ENCODE measurements at regions of chr12 and their contacts with region 1.

Region 1: DNA sequence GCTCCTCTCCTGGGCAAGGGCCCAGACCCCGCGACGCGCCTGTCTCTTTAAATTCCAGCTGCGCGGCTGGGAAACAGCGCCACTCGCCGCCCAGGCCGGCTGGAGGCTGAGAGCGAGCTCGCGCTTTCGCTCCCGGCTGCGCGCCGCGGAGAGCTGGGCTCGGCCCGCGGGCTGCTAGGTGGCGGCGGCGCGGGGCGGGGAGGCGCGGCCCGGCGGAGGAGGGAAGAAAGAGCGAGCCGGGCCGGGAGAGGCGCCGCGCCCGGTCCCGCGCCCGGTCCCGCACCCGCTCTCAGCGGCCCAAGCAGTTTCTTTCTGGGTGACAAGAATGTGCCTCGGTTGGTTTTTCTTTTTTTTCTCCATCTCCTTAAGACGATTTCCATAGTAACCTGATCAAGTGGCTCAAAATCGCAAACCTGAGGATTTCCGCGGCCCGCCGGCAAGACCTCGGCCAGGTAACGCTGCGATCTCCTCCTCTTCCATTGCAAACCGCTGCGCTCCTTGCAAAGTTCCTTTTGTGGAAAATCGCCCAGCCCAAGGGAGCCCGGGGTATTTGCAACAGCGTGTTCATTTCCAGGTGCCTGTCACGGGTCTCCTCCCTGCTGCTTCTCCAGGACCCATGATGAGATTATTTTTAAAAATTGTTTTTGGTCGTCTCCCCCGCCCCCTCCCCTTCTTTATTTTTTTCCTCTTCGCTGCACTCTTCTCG is 259.5 kb upstream of the E2F7 start:
- DNase-seq: peak; percentile 54 to 83 (median 70)
- H3K4me3 ChIP-seq: peak overlapping the region; percentile 56 to 84 (median 73)
- H3K27ac ChIP-seq: peak overlapping the region in 57 of 59 donors; percentile 13 to 92 (median 82)
- H3K27me3 ChIP-seq: no peaks in the 10 kb centered on the region
- CTCF ChIP-seq: peak in 53 of 56 donors; percentile 19 to 71 (median 46)

Region 2: DNA sequence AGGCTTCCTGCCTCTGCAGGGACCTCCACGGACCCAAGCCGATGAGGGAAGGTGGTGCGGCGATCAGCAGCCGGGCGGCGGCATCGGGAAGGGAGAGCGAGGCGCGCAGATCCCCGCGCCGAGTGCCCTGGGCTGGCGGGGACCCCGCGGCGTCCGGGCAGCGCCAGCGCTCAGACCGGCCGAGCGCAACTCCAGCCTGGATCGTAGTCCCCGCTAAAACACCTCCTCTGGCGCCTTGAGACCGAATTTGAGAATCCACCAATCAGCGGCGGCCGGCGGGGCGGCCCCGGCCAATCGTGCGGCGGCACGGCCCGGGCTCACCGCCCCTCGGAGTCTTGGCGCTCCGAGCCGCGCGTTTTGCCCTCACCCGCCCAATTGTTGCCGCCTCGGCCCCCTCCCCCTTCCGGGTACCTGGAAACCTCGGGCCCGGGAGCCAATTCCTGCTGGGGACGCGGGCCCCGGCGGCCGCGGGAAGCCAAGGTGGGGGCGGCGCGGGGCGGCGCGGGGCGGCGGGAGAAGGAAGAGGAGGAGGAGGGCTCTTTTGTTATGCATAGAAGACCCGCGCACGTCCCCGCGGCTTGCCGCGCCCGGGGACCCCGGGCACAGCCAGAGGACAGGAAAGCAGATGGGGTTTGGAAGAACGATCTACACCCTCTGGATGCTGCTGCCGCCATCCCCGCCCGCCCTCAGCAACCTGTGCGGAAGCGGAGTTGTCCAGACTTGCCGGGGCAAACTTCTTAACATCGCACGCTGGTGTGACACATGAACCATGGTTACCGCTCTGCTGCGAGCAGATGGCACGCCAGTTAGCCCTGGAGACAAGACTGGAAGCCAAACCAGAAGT is 259.3 kb before region 1 on chr12 and contains the start of gene E2F7:
- intact Hi-C with region 1: loop called in 1 of 2 experiments (anchors 10 kb)
- DNase-seq: peak; percentile 66 to 91 (median 76)
- H3K4me3 ChIP-seq: peak within 1 kb of the TSS; percentile 53 to 92 (median 78)
- H3K27ac ChIP-seq: peak within 1 kb of the TSS in 5 of 59 donors; percentile 2 to 66 (median 14)
- H3K27me3 ChIP-seq: peaks cover 0 to 36% (median 9%) of the 10 kb centered on the region in 45 donors
- CTCF ChIP-seq: peak in 9 of 56 donors; percentile 4 to 26 (median 18)
- total RNA-seq, gene E2F7: 0.08 to 2.3 (median 0.33) TPM in 96 of 120 experiments, not detected in the others

Region 3: GRCh38 chr12:77256956-77257355 is 68.0 kb before region 1 on chr12:
- intact Hi-C with region 1: loop called in 1 of 2 experiments (anchors 10 kb)
- DNase-seq: no peak
- H3K4me3 ChIP-seq: no peak overlapping the region
- H3K27ac ChIP-seq: no peak overlapping the region
- H3K27me3 ChIP-seq: no peaks in the 10 kb centered on the region
- CTCF ChIP-seq: no peak